K562 (cell line): ENCODE measurements at regions of chr1 and their contacts with region 1.

Region 1: DNA sequence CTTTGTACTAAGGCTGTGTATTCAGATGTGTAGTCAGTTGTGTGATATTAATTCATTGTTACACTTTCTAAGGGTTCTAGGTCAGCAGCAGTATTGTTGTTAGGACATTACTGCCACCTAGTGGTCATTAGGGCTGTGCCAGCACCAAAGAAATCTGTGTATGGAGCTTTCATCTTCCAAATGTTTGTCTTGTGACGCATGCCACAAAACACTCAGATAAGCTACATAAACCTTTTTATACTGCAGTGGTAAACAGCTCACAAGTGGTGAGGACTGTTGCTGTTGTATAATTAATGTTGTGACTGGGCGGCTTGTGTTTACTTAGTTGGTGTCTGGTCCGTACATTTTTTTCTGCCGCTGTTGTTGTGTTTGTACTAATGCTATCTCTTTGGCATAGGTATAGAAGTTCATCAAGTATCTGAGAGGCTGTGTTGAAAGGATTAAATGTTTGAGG is 51.7 kb downstream of the S1PR1 start:
- DNase-seq: peak; percentile 58 to 81 (median 65)
- ATAC-seq: peak; percentile 88
- H3K4me3 ChIP-seq: no peak overlapping the region
- H3K27ac ChIP-seq: no peak overlapping the region
- H3K4me1 ChIP-seq: peaks cover 5 to 14% of the 10 kb centered on the region in 2 experiments
- H3K27me3 ChIP-seq: no peaks in the 10 kb centered on the region; a peak in 1 of 5 replicates
- CTCF ChIP-seq: peak; percentile 67 to 90 (median 82)
- EP300 ChIP-seq: no peak
- POLR2A ChIP-seq: no peak
- RAD21 ChIP-seq: peak; percentile 97 to 98

Region 2: GRCh38 chr1:100921109-100921706 is 367.3 kb before region 1 on chr1:
- CTCF ChIA-PET with region 1: interaction called, 31 read pairs
- POLR2A ChIA-PET with region 1: no interaction called
- in situ Hi-C with region 1: loop called (anchors 5 kb)
- intact Hi-C with region 1: loop called (anchors 2 kb)
- DNase-seq: peak; percentile 16 to 60 (median 22)
- ATAC-seq: peak; percentile 44; the same call in 1 of the 3 replicates
- H3K4me3 ChIP-seq: no peak overlapping the region
- H3K27ac ChIP-seq: no peak overlapping the region
- H3K4me1 ChIP-seq: no peaks in the 10 kb centered on the region
- H3K27me3 ChIP-seq: no peaks in the 10 kb centered on the region
- CTCF ChIP-seq: peak in 2 of 3 experiments; percentile 31 to 79; a peak in 3 of 6 replicates
- EP300 ChIP-seq: no peak
- POLR2A ChIP-seq: no peak
- RAD21 ChIP-seq: peak; percentile 79 to 84

Region 3: GRCh38 chr1:101025657-101026504 is 262.6 kb before region 1 on chr1 and contains the start of gene DPH5:
- CTCF ChIA-PET with region 1: no interaction called
- POLR2A ChIA-PET with region 1: no interaction called
- in situ Hi-C with region 1: no loop called
- intact Hi-C with region 1: loop called (anchors 10 kb)
- DNase-seq: peak; percentile 88 to 94 (median 92)
- ATAC-seq: peak; percentile 92
- H3K4me3 ChIP-seq: peak within 1 kb of the TSS; percentile 69
- H3K27ac ChIP-seq: peak within 1 kb of the TSS; percentile 87
- H3K4me1 ChIP-seq: peaks cover 4 to 8% of the 10 kb centered on the region in 2 experiments; a peak in 2 of 5 replicates
- H3K27me3 ChIP-seq: no peaks in the 10 kb centered on the region
- CTCF ChIP-seq: no peak
- EP300 ChIP-seq: no peak
- POLR2A ChIP-seq: peak; percentile 98
- RAD21 ChIP-seq: peak in 1 of 2 experiments; percentile 3; a peak in 2 of 4 replicates
- polyA plus RNA-seq, gene DPH5: 121 to 152 TPM

Region 4: GRCh38 chr1:101136739-101137138 is 151.8 kb before region 1 on chr1:
- CTCF ChIA-PET with region 1: interaction called, 5 read pairs
- POLR2A ChIA-PET with region 1: interaction called, 3 read pairs
- in situ Hi-C with region 1: loop called (anchors 10 kb)
- intact Hi-C with region 1: loop called (anchors 2 kb)
- DNase-seq: no peak
- ATAC-seq: peak; percentile 64
- H3K4me3 ChIP-seq: no peak overlapping the region
- H3K27ac ChIP-seq: no peak overlapping the region
- H3K4me1 ChIP-seq: peaks cover 0 to 20% of the 10 kb centered on the region in 2 experiments; a peak in 3 of 5 replicates
- H3K27me3 ChIP-seq: no peaks in the 10 kb centered on the region
- CTCF ChIP-seq: peak in 2 of 3 experiments; percentile 19 to 55; a peak in 2 of 6 replicates
- EP300 ChIP-seq: peak; percentile 5; the same call in 1 of the 2 replicates
- POLR2A ChIP-seq: no peak
- RAD21 ChIP-seq: peak; percentile 54 to 70

Region 5: DNA sequence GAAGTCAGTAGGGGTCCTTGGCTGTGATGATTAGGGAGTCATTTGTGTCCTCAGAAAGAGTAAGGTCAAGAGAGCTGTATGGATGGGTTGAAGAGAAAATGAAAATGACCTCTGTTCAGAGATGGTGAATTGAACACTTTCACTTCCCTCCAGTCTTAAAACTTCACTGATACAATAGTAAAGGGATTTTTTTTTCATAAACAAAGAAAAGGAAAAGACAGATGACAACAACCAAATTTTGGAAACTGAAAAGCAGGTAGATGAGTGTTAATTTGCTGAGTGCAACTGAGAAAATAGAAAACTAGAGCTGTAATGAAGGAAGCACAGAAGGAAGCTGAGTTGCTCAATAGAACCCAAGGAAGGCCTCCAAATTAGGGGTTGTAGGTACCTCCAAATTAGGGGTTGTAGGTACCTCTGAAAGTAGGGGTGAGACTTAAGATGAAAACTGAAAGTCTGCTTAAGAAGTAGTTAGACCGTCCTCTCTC is 66.5 kb before region 1 on chr1:
- CTCF ChIA-PET with region 1: no interaction called
- POLR2A ChIA-PET with region 1: no interaction called
- in situ Hi-C with region 1: no loop called
- intact Hi-C with region 1: no loop called
- DNase-seq: no peak
- ATAC-seq: no peak
- H3K4me3 ChIP-seq: no peak overlapping the region
- H3K27ac ChIP-seq: no peak overlapping the region
- H3K4me1 ChIP-seq: peaks cover 0 to 5% of the 10 kb centered on the region in 2 experiments; a peak in 3 of 5 replicates
- H3K27me3 ChIP-seq: no peaks in the 10 kb centered on the region
- CTCF ChIP-seq: no peak
- EP300 ChIP-seq: no peak
- POLR2A ChIP-seq: no peak
- RAD21 ChIP-seq: no peak